Activated CD8-positive, alpha-beta T cell treated with anti-CD3 and anti-CD28 coated beads, Interleukin-2, amount 10 ng/mL, durations not matched to agents 7 days and 5 days (primary cell): ENCODE measurements at regions of chr6 and their contacts with region 1.

Region 1: DNA sequence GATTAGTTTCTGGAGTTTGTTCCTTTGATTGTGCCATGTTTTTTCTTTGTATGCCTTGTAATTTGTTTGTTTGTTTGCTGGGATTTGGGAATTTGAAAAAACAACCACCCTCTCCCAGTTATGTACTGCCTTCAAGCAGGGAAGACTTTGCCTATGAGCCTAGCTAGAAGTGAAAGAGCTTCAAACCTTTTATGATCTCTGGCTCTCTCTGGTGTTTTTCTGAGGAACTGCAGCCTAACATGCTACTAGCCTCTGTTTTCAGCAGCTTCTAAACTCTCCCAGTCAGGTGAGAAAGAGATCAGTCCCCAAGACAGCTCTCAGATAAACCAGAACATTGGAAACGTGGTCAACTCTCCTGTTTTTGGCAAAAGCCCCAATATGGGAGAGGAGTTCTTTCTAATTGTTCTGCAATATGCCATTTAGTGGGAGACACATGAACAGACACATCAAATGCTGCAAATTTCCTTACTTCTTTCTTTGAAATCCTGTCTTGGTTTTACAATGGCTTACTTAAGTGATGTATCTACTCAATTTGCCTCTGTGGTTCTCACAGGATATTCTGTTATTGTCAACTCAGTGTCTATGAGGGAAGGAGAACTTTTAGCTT is 58.9 kb upstream of the SERINC1 start:
- DNase-seq: peak; percentile 73
- ATAC-seq: peak; percentile 82
- H3K4me3 Mint-ChIP-seq: no peak overlapping the region
- H3K27ac Mint-ChIP-seq: no peak overlapping the region
- H3K4me1 Mint-ChIP-seq: no peaks in the 10 kb centered on the region
- H3K27me3 Mint-ChIP-seq: peaks cover 19% of the 10 kb centered on the region

Region 2: GRCh38 chr6:122381497-122382265 is 148.9 kb before region 1 on chr6:
- CTCF ChIA-PET with region 1: interaction called, 83 read pairs
- POLR2A ChIA-PET with region 1: no interaction called
- DNase-seq: peak; percentile 71
- ATAC-seq: peak; percentile 91
- H3K4me3 Mint-ChIP-seq: no peak overlapping the region
- H3K27ac Mint-ChIP-seq: no peak overlapping the region
- H3K4me1 Mint-ChIP-seq: no peaks in the 10 kb centered on the region
- H3K27me3 Mint-ChIP-seq: peaks cover 8% of the 10 kb centered on the region

Region 3: GRCh38 chr6:122471107-122472021 is 59.2 kb before region 1 on chr6 and contains the start of gene SERINC1:
- CTCF ChIA-PET with region 1: interaction called, 15 read pairs
- POLR2A ChIA-PET with region 1: interaction called, 3 read pairs
- DNase-seq: peak; percentile 95
- ATAC-seq: peak; percentile 99
- H3K4me3 Mint-ChIP-seq: peak within 1 kb of the TSS; percentile 94
- H3K27ac Mint-ChIP-seq: peak within 1 kb of the TSS; percentile 99
- H3K4me1 Mint-ChIP-seq: peaks cover 23% of the 10 kb centered on the region
- H3K27me3 Mint-ChIP-seq: no peaks in the 10 kb centered on the region
- total RNA-seq, gene SERINC1: 41.9 to 44.9 TPM

Region 4: GRCh38 chr6:122511193-122511924 is 19.2 kb before region 1 on chr6:
- CTCF ChIA-PET with region 1: interaction called, 24 read pairs
- POLR2A ChIA-PET with region 1: interaction called, 3 read pairs
- DNase-seq: no peak
- ATAC-seq: no peak
- H3K4me3 Mint-ChIP-seq: no peak overlapping the region
- H3K27ac Mint-ChIP-seq: no peak overlapping the region
- H3K4me1 Mint-ChIP-seq: no peaks in the 10 kb centered on the region
- H3K27me3 Mint-ChIP-seq: peaks cover under 1% of the 10 kb centered on the region